ENCODE measurements at regions of chr19 and their contacts with region 1.

Region 1: GRCh38 chr19:40403262-40403984 is 9.8 kb downstream of the PRX start:
- DNase-seq: peak; percentile 93 to 94
- ATAC-seq: peak; percentile 89 to 96 (median 94)
- H3K4me3 ChIP-seq: peak overlapping the region; percentile 51 to 73 (median 63)
- H3K27ac ChIP-seq: peak overlapping the region; percentile 51 to 89 (median 86)
- H3K4me1 ChIP-seq: peaks cover 0 to 21% (median 12%) of the 10 kb centered on the region in 9 donors
- H3K27me3 ChIP-seq: no peaks in the 10 kb centered on the region
- CTCF ChIP-seq: peak in 2 of 9 donors; percentile 28 to 34

Region 2: DNA sequence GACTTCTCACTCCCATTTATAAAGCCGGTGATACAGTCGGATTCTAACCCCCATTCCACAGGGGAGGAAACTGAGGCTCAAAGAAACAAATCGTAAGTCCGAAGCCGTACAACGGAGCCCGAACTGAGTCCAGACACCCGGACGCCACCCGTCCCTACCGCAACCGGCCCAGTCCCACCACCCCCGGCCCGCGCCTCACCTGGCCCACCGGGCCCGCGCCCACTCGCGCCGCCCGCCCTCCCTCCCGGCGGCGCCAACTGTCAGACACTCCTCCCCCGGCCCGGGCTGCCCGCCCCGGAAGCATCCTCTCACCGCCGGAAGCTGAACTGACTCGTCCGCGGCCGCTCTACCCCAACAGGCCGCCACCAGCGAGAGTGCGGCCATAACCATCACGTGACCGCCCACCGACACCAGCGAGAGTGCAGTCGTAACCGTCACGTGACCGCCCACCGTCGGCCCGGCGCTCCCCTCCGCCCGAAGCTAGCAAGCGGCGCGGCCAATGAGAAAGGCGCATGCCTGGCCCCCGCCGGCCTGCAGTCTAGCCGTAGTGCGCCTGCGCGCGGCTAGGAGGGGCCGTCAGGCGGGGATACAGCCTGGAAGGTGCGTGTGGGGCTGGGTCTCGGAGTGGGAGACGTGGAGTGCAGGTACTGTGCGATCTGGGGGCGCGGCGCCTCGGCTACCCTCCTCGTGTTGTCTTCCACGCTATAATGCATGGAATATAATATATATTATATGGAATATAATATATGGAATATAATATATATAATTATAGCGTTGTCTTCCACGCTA is 55.1 kb before region 1 on chr19 and contains the starts of genes C19orf47 and PLD3:
- intact Hi-C with region 1: loop called in 3 of 10 experiments (anchors 1 to 5 kb)
- DNase-seq: peak; percentile 99
- ATAC-seq: peak; percentile 97 to 99 (median 98)
- H3K4me3 ChIP-seq: peak within 1 kb of the TSS; percentile 59 to 91 (median 76)
- H3K27ac ChIP-seq: peak within 1 kb of the TSS in 9 of 10 donors; percentile 72 to 88 (median 80)
- H3K4me1 ChIP-seq: peaks cover 4 to 45% (median 25%) of the 10 kb centered on the region in 9 donors
- H3K27me3 ChIP-seq: no peaks in the 10 kb centered on the region
- CTCF ChIP-seq: no peak
- total RNA-seq, gene C19orf47: 138 to 227 (median 145) TPM
- total RNA-seq, gene PLD3: 136 to 238 (median 181) TPM

Region 3: GRCh38 chr19:40358773-40359172 is 44.6 kb before region 1 on chr19:
- intact Hi-C with region 1: loop called in 3 of 10 experiments (anchors 5 kb)
- DNase-seq: no peak
- ATAC-seq: peak in 7 of 8 donors; percentile 43 to 70 (median 54)
- H3K4me3 ChIP-seq: no peak overlapping the region
- H3K27ac ChIP-seq: peak overlapping the region in 1 of 10 donors; percentile 62
- H3K4me1 ChIP-seq: peaks cover 0 to 65% (median 0%) of the 10 kb centered on the region in 9 donors
- H3K27me3 ChIP-seq: no peaks in the 10 kb centered on the region
- CTCF ChIP-seq: no peak

Region 4: DNA sequence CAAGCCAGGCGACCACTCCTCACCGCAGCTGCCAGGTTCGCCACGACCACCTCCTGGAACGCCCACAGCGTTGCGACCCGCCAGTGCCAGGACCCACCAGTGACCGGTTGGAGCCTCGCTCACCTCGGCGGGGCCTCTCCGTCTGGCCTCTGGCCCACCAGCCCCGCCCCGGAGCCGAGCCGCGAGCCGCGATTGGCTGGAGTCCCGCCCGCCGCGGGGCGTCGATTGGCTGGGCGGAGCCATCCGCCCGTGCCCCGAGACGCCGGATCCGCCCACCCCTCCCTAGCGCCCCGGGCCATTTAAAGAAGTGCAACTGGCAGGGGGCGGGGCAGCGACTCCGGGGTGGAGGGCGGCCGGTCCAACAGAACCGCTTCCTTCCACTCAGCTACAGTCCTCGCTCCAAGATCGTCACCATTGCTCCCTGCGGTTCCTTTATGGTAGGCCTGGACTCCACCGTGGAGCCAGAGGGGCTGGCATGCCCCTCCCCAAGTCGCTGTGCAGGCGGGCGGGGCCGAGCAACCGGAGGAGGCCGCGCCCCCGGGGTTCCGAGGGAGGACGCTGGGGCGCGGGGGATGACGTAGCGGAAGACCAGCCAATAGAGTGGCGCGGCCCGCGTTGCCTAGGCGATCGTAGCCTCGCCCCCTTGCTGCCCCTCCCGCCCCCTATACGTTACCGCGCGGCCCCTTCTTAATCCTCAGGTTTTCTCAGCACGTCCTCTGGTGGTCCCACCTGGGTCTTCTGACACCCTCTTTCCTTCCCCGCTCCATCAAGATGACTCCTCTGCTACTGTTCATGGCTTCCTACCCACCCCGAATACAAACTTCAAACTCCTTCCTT is 41.0 kb after region 1 on chr19 and contains the start of gene SERTAD3:
- intact Hi-C with region 1: no loop called
- DNase-seq: peak; percentile 97
- ATAC-seq: peak; percentile 82 to 90 (median 88)
- H3K4me3 ChIP-seq: peak within 1 kb of the TSS; percentile 70 to 96 (median 85)
- H3K27ac ChIP-seq: peak within 1 kb of the TSS; percentile 80 to 100 (median 97)
- H3K4me1 ChIP-seq: peaks cover 10 to 38% (median 27%) of the 10 kb centered on the region in 9 donors
- H3K27me3 ChIP-seq: no peaks in the 10 kb centered on the region
- CTCF ChIP-seq: peak in 6 of 9 donors; percentile 15 to 51 (median 39)
- total RNA-seq, gene SERTAD3: 19.4 to 37.5 (median 27.4) TPM

Region 5: DNA sequence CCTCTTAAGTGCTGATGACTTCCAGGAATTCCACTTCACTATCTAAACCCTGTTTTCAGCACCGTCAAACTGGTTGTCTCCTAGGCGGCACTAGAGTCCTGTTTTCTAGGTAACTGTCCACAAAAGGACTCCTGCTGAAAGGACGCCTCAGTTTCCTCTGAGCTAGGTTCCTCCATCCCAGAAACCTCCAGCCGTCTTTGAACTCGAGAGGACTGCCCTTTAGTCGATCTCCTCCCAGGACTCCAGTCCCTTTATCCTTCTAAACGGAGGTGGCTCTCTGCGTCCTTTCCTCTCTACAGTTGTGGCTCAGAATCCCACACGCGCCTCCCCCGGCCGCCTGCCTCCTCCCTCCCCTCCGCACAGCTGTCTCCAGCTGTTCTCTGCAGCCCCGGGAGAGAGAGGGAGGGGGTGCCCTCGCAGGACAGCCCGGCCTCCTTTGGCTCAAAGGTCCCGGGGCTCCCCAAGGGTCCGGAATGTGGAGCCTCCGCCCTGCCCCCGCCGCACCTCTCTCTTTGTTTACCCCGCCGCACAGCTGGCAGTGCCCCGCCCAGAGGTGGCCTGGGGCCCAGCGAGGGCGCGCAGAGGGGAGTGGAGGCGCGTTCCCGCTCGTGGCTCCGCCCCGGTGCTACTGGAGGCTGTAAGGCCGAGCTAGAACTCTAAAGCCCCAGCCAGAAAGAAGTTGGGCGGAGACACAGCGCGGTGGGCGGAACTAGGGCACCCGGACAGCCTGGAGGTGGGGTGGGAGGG is 200.1 kb after region 1 on chr19:
- intact Hi-C with region 1: no loop called
- DNase-seq: peak; percentile 98
- ATAC-seq: peak; percentile 72 to 85 (median 81)
- H3K4me3 ChIP-seq: peak overlapping the region in 9 of 10 donors; percentile 40 to 81 (median 72)
- H3K27ac ChIP-seq: peak overlapping the region; percentile 49 to 96 (median 90)
- H3K4me1 ChIP-seq: peaks cover 26 to 88% (median 74%) of the 10 kb centered on the region in 9 donors
- H3K27me3 ChIP-seq: peaks cover 0 to 68% (median 0%) of the 10 kb centered on the region in 7 donors
- CTCF ChIP-seq: no peak